ENCODE measurements at regions of chr3 and their contacts with region 1.

Region 1: GRCh38 chr3:120438665-120439370 is 12.0 kb downstream of the FSTL1 start:
- DNase-seq: peak in 1 of 2 experiments; percentile 58
- ATAC-seq: peak; percentile 69 to 81; a peak in 5 of 6 replicates
- H3K4me3 ChIP-seq: no peak overlapping the region
- H3K27ac ChIP-seq: peak overlapping the region; percentile 78 to 83
- H3K4me1 ChIP-seq: peaks cover 68% of the 10 kb centered on the region
- CTCF ChIP-seq: no peak
- EP300 ChIP-seq: no peak; a peak in 1 of 5 replicates
- POLR2A ChIP-seq: no peak
- RAD21 ChIP-seq: no peak

Region 2: GRCh38 chr3:119912220-119912619 is 526.6 kb before region 1 on chr3:
- CTCF ChIA-PET with region 1: no interaction called
- POLR2A ChIA-PET with region 1: no interaction called
- DNase-seq: no peak
- ATAC-seq: no peak
- H3K4me3 ChIP-seq: no peak overlapping the region
- H3K27ac ChIP-seq: no peak overlapping the region
- H3K4me1 ChIP-seq: 0 out of 3 replicates have a peak, but pooled peaks cover 4% of the 10 kb centered on the region
- CTCF ChIP-seq: no peak
- EP300 ChIP-seq: no peak
- POLR2A ChIP-seq: no peak
- RAD21 ChIP-seq: no peak

Region 3: GRCh38 chr3:120450600-120451271 is 11.9 kb after region 1 on chr3 and contains the start of gene FSTL1:
- CTCF ChIA-PET with region 1: interaction called, 11 read pairs
- POLR2A ChIA-PET with region 1: interaction called, 7 read pairs
- DNase-seq: peak; percentile 32 to 41
- ATAC-seq: peak; percentile 74 to 78
- H3K4me3 ChIP-seq: peak within 1 kb of the TSS; percentile 81
- H3K27ac ChIP-seq: peak within 1 kb of the TSS; percentile 80 to 94
- H3K4me1 ChIP-seq: peaks cover 21% of the 10 kb centered on the region
- CTCF ChIP-seq: no peak
- EP300 ChIP-seq: no peak
- POLR2A ChIP-seq: peak; percentile 72
- RAD21 ChIP-seq: no peak
- polyA plus RNA-seq, gene FSTL1: 57.7 and 84.7 TPM in 2 replicates

Measured in A549 (cell line).